ENCODE measurements at regions of chr16 and their contacts with region 1.

Region 1: DNA sequence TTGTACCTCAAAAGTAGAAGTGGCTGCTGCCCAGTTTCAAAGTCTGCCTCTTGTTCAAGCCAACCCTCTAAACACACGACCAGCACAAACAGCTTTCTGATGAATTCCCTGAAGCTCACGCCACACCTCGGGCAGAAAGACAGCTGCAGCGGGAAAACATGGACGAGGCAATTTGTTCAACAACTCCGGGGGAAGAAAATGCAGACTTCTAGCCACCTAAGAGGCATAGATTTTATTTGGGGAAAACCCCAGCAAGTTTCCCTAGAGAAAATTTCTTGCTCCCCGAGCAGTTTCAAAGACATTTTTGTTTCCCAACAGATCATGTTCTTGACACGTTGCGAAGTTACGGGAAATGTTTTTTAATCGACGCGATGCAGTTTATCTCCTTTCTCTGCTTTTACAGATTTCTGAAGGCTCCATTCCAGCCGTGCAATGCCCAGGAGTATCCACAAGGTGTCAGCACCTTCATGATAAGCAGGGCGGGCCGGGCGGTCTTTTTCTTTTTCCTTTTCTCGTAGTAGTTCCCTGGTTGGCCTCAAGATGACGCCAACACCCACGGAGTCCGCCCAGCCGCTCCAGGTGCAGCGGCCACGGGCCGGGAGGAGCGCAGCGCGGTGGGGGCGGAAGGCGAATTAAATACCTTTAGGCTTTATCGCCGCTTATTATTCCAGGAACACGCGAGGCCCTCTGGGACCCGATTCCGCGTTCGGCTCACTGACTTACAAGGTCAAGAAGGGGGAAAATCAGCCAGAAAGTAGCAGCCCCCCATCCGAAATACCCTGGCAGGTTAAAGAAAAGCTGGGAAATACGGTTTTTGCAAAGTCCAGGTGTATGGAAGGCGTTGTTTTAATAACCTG is 2.9 kb upstream of the FOXC2 start:
- DNase-seq: peak; percentile 95
- H3K4me3 ChIP-seq: peak overlapping the region; percentile 81 to 86
- H3K27ac ChIP-seq: peak overlapping the region; percentile 95 to 97
- H3K4me1 ChIP-seq: peaks cover 0 to 18% (median 8%) of the 10 kb centered on the region in 4 donors
- H3K27me3 ChIP-seq: no peaks in the 10 kb centered on the region
- CTCF ChIP-seq: peak; percentile 100

Region 2: GRCh38 chr16:87062569-87063442 is 499.1 kb after region 1 on chr16:
- intact Hi-C with region 1: loop called (anchors 2 kb)
- DNase-seq: peak; percentile 73 to 89
- H3K4me3 ChIP-seq: peak overlapping the region; percentile 38 to 49
- H3K27ac ChIP-seq: peak overlapping the region; percentile 79 to 83
- H3K4me1 ChIP-seq: peaks cover 0 to 47% (median under 1%) of the 10 kb centered on the region in 4 donors
- H3K27me3 ChIP-seq: no peaks in the 10 kb centered on the region
- CTCF ChIP-seq: peak; percentile 86 to 89

Region 3: GRCh38 chr16:87203060-87203656 is 639.4 kb after region 1 on chr16:
- intact Hi-C with region 1: loop called (anchors 5 kb)
- DNase-seq: peak; percentile 64 to 88
- H3K4me3 ChIP-seq: no peak overlapping the region
- H3K27ac ChIP-seq: peak overlapping the region; percentile 67 to 74
- H3K4me1 ChIP-seq: peaks cover 0 to 51% (median 30%) of the 10 kb centered on the region in 4 donors
- H3K27me3 ChIP-seq: no peaks in the 10 kb centered on the region
- CTCF ChIP-seq: peak; percentile 78 to 88

Region 4: GRCh38 chr16:87278191-87279095 is 714.7 kb after region 1 on chr16:
- intact Hi-C with region 1: loop called (anchors 5 kb)
- DNase-seq: peak; percentile 76 to 89
- H3K4me3 ChIP-seq: no peak overlapping the region
- H3K27ac ChIP-seq: no peak overlapping the region
- H3K4me1 ChIP-seq: peaks cover 0 to 8% (median 2%) of the 10 kb centered on the region in 4 donors
- H3K27me3 ChIP-seq: no peaks in the 10 kb centered on the region
- CTCF ChIP-seq: peak; percentile 82 to 93

Measured in tibial artery (tissue), 4 donors.